Activated CD4-positive, alpha-beta memory T cell treated with anti-CD3 and anti-CD28 coated beads for 36 hours (primary cell): ENCODE measurements at regions of chr14 and their contacts with region 1.

Region 1: GRCh38 chr14:91418387-91419043 is 895 bp upstream of the CCDC88C start:
- DNase-seq: peak; percentile 88
- H3K4me3 Mint-ChIP-seq: peak overlapping the region; percentile 61
- H3K27ac Mint-ChIP-seq: peak overlapping the region; percentile 72
- H3K4me1 Mint-ChIP-seq: peaks cover 32% of the 10 kb centered on the region
- H3K27me3 Mint-ChIP-seq: no peaks in the 10 kb centered on the region

Region 2: DNA sequence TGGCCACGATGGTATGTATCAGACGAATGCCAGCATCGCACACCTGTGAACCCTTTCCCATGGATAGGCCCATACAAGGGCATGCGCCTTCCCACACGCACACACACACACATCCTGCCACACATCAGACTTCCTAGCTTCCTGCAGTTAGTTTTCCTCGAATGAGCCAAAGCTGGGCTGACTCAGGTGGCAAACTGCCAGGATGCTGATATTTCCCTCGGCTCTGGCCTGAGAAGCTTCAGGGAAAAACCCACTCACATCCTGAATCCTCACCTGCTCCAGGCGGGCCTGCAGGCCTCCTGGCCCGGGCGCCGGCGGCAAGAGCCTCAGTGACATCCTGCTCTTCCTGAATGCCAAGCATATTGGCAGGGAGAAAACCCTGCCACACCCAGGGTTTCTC is 999.3 kb before region 1 on chr14:
- CTCF ChIA-PET with region 1: no interaction called
- POLR2A ChIA-PET with region 1: no interaction called
- intact Hi-C with region 1: no loop called
- DNase-seq: no peak
- H3K4me3 Mint-ChIP-seq: no peak overlapping the region
- H3K27ac Mint-ChIP-seq: no peak overlapping the region
- H3K4me1 Mint-ChIP-seq: no peaks in the 10 kb centered on the region
- H3K27me3 Mint-ChIP-seq: no peaks in the 10 kb centered on the region

Region 3: DNA sequence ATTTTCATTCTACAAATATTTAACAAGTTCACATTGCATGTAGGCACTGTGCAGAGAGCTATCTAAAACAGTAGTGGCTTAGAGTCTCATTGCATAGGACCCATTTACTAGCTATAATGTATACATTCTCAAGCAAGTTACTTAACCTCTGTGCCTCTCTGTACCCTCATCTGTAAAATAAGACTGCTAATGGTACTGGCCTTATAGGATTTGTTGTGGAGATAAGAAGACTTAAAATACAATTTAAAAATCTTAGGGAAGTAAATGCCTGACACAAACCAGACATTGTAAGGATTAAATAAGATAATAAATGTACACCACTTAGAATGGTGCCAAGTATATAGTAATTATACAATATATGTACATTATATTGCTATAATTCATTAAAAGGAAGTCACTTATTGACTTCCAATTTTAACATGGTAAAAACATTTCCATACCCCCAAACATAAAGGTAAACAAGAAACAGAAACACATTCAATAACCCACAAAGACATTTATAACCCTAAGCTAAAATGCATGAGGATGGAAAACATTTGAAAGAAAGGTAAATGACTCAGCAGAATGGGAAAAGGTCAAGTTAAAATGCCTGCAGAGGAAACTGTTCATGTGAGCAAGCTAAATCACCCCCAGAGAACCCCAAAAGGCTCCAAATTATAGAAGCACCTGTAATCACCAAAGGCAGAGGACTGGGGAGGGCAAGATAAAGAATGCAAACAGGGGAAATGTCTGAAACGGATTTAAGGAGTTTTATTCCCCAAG is 388.9 kb before region 1 on chr14:
- CTCF ChIA-PET with region 1: no interaction called
- POLR2A ChIA-PET with region 1: no interaction called
- intact Hi-C with region 1: no loop called
- DNase-seq: no peak
- H3K4me3 Mint-ChIP-seq: no peak overlapping the region
- H3K27ac Mint-ChIP-seq: peak overlapping the region; percentile 38
- H3K4me1 Mint-ChIP-seq: peaks cover 56% of the 10 kb centered on the region
- H3K27me3 Mint-ChIP-seq: no peaks in the 10 kb centered on the region

Region 4: DNA sequence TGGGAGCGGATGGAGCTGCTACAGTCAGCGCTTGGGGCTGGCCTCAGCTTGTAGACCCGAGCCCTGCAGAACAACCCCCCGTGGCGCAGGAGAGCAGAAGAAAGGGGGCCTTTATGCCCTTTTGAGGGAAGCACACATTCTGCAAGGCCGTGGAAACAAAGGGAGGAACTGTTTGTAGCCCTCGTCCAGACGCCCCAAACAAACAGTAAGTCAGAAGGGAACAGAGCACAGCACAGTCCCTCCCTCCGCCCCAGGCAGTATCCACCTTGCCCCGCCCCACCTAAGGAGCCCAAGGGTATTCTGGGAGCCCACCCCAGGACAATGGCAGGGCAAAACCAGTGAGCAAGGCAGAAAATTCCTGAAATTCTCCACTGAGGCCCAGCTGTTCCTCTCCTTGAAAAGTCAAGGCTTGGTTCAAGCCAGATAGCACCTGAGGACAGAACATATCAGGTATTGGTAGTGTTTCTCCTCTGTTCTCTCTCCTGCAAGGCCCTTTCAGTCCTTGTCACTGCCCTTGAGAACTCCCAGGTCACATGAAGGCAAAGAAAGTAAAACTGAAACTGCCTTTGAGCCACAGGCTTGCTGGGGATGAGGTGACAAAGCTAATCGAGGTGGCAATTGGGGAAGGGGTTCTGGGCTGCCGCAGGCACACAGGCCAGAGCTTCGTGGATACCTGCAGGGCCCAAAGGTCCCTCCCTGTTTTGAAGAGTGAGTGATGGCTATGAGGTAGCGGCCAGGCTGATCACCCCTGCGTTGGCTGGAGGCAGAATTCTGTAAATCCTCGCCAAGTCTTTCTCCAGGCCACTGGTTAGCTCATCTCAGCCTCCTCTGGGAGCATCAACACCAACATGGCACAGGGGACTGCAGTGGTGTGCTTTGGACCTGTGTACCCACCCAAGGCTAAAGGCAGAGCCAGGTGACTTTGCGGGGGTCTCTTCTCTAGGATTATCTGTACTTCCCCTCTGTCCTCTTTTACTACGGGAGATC is 304.1 kb before region 1 on chr14:
- CTCF ChIA-PET with region 1: no interaction called
- POLR2A ChIA-PET with region 1: no interaction called
- intact Hi-C with region 1: loop called (anchors 5 kb)
- DNase-seq: peak; percentile 81
- H3K4me3 Mint-ChIP-seq: peak overlapping the region; percentile 83
- H3K27ac Mint-ChIP-seq: peak overlapping the region; percentile 94
- H3K4me1 Mint-ChIP-seq: peaks cover 66% of the 10 kb centered on the region
- H3K27me3 Mint-ChIP-seq: no peaks in the 10 kb centered on the region

Region 5: GRCh38 chr14:91244501-91244901 is 174.0 kb before region 1 on chr14 and contains the start of gene GPR68:
- CTCF ChIA-PET with region 1: interaction called, 3 read pairs
- POLR2A ChIA-PET with region 1: interaction called, 8 read pairs
- intact Hi-C with region 1: loop called (anchors 2 kb)
- DNase-seq: peak; percentile 51
- H3K4me3 Mint-ChIP-seq: peak within 1 kb of the TSS; percentile 73
- H3K27ac Mint-ChIP-seq: peak within 1 kb of the TSS; percentile 84
- H3K4me1 Mint-ChIP-seq: peaks cover 93% of the 10 kb centered on the region
- H3K27me3 Mint-ChIP-seq: no peaks in the 10 kb centered on the region
- total RNA-seq, gene GPR68: 6.5 to 6.9 TPM

Region 6: DNA sequence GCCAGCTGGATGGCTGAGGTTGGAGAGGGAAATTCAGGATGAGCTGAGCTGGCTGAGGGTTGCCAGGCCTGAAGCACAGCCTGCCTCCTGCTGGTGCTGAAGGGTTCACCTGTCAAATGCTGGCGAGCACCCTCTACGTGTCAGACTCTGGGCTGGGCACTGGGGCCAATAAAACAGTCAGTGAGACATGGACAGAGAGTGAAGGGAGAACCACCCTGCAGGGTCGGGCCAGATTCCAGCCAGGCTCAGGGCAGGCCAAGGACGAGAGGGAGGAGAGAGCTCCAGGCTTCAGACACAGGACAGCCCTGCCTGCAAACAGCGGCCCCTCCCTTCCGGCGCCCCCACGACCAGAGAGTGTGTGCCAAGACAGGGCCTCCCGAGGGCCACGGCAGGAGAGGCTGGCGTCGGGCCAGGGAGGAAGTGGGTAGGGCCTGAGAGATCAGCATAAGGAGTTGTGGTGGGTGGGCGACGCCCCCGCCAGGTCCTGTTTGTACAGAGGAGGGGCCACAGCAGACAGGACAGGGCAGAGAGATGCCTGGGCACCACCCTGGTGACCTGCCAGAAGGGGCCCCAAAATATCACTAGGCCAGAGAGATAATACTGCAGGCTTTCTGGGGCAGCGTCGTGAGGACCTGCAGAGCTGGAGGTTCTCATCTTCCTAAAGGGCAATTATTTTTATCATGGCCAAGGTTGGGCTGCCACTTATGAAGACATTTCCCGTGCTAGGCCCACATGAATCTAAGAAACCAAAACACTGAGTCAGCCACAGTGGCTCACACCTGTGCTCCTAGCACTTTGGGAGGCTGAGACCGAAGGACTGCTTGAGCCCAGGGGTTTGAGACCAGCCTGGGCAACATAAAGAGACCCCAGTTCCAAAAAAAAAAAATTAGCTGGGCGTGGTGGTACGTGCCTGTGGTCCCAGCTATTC is 100.9 kb before region 1 on chr14:
- CTCF ChIA-PET with region 1: interaction called, 99 read pairs
- POLR2A ChIA-PET with region 1: interaction called, 3 read pairs
- intact Hi-C with region 1: loop called (anchors 1 kb)
- DNase-seq: peak; percentile 92
- H3K4me3 Mint-ChIP-seq: peak overlapping the region; percentile 60
- H3K27ac Mint-ChIP-seq: peak overlapping the region; percentile 94
- H3K4me1 Mint-ChIP-seq: peaks cover 78% of the 10 kb centered on the region
- H3K27me3 Mint-ChIP-seq: no peaks in the 10 kb centered on the region

Region 7: GRCh38 chr14:91350813-91351511 is 67.6 kb before region 1 on chr14:
- CTCF ChIA-PET with region 1: interaction called, 58 read pairs
- POLR2A ChIA-PET with region 1: interaction called, 17 read pairs
- intact Hi-C with region 1: loop called (anchors 1 kb)
- DNase-seq: peak; percentile 86
- H3K4me3 Mint-ChIP-seq: peak overlapping the region; percentile 68
- H3K27ac Mint-ChIP-seq: peak overlapping the region; percentile 88
- H3K4me1 Mint-ChIP-seq: peaks cover 93% of the 10 kb centered on the region
- H3K27me3 Mint-ChIP-seq: no peaks in the 10 kb centered on the region

Region 8: DNA sequence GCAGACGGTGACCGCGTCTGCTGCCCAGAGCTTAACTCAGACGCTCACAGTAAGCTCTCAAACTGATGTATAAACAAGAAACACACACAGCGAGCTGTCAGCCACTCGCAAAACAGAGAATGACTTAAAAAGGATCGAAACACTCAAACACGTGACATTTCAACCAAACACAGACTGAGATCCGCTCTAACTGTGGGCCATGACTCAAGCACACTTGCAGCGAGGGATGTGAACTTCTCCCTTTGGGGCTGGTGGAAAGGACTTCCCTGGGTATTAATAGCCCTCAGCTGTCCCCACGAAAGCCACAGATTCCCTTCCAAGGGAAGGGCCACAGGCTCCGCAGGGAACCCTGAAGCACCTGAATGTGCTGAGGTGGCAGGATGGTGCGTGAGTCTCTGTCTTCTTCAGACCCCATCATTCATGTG is 30.0 kb before region 1 on chr14:
- CTCF ChIA-PET with region 1: interaction called, 4 read pairs
- POLR2A ChIA-PET with region 1: interaction called, 9 read pairs
- intact Hi-C with region 1: loop called (anchors 1 kb)
- DNase-seq: peak; percentile 73
- H3K4me3 Mint-ChIP-seq: peak overlapping the region; percentile 35
- H3K27ac Mint-ChIP-seq: peak overlapping the region; percentile 83
- H3K4me1 Mint-ChIP-seq: peaks cover 84% of the 10 kb centered on the region
- H3K27me3 Mint-ChIP-seq: no peaks in the 10 kb centered on the region

Region 9: DNA sequence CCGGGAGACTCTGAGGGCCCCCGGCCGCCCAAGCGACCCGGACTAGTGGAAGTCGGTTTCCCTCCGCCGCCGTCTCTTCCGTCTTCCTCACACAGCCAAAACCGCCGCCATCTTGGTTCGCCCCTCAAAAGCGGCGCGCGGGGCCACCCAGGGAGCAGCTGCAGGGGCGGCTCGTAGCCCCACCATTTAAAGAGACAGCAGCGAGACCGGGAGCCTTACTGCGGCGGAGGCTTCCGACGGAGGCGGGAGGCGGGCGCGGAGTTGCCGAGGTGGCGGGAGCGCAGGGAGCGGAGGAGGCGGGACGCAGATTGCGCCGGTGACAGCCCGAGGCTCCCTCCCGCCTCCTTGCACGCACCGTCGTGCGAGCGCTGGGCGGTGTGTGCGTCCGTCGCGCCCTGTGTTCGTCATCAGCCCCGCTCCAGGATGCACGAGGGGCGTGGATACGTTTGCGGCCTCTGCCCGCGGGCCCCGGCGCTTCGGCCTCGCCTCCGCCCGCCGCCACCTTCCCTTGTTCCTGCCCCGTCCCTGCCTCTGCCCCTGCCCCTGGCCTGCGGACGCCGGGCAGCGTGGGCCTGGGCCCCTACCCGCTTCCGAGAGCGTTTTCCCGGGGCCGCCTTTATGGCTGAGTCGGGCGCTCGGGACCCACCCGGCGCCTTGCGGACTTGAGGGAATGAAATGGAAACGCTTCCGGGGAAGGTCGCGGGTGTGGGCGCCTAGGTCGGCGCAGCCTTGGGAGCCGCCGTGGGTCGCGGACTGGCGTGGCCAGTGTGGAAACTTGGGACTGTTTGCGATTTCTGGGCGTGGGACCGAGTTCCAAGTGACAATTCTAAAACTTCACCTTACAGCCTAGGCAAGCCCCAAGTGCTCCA is 91.9 kb after region 1 on chr14 and contains the start of gene PPP4R3A:
- CTCF ChIA-PET with region 1: no interaction called
- POLR2A ChIA-PET with region 1: interaction called, 10 read pairs
- intact Hi-C with region 1: loop called (anchors 5 kb)
- DNase-seq: peak; percentile 96
- H3K4me3 Mint-ChIP-seq: peak within 1 kb of the TSS; percentile 94
- H3K27ac Mint-ChIP-seq: peak within 1 kb of the TSS; percentile 95
- H3K4me1 Mint-ChIP-seq: peaks cover 20% of the 10 kb centered on the region
- H3K27me3 Mint-ChIP-seq: no peaks in the 10 kb centered on the region
- total RNA-seq, gene PPP4R3A: 92.4 to 96.4 TPM